ENCODE measurements at regions of chr3 and their contacts with region 1.

Region 1: DNA sequence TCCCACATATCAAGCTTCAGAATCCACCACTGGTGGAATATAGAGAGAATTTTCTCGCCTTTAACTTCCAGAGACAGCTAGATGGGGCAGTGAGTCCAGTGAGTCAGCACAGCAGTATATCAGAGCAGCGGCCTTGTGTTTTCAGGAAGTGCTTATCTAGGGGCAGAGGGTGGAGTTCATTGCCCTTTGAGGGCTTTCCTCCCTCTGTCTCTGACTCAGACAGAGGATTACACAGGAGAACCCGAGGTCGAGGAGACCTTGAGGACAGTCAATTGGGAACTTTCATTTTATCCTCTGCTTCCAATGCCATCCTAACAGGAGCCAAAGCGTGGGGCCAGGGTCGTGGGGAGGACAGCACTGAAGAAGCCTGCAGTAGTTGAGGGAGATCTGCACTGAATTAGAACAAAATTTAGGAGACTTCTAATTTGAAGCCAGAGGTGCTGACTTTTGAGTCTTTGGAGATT is 109.6 kb upstream of the UMPS start:
- DNase-seq: no peak
- H3K4me3 Mint-ChIP-seq: no peak overlapping the region
- H3K27ac Mint-ChIP-seq: peak overlapping the region; percentile 64
- H3K4me1 Mint-ChIP-seq: peaks cover 25% of the 10 kb centered on the region
- H3K27me3 Mint-ChIP-seq: peaks cover 11% of the 10 kb centered on the region

Region 2: GRCh38 chr3:124652009-124652408 is 31.4 kb after region 1 on chr3:
- intact Hi-C with region 1: no loop called
- DNase-seq: no peak
- H3K4me3 Mint-ChIP-seq: no peak overlapping the region
- H3K27ac Mint-ChIP-seq: no peak overlapping the region
- H3K4me1 Mint-ChIP-seq: peaks cover 20% of the 10 kb centered on the region
- H3K27me3 Mint-ChIP-seq: peaks cover 35% of the 10 kb centered on the region

Region 3: DNA sequence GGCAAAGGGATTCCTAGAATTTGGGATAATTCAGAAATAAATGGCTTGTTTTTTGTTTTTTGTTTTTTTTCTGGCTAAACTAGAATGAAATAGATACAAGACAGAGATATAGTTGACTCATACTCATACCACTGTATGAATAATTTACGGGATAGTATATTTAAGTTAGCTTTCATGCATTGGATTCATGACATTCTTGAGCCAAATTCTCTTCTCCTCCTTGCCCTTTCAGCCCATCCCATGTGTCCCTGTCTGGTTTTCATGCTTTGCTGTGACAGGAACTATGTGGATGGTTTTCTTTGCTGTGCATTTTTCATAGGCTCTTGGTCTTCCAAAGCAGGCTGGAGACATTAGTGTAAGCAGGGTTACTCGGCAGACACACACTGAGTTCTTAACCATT is 43.1 kb after region 1 on chr3:
- intact Hi-C with region 1: loop called (anchors 5 kb)
- DNase-seq: no peak
- H3K4me3 Mint-ChIP-seq: no peak overlapping the region
- H3K27ac Mint-ChIP-seq: no peak overlapping the region
- H3K4me1 Mint-ChIP-seq: peaks cover 6% of the 10 kb centered on the region
- H3K27me3 Mint-ChIP-seq: peaks cover 16% of the 10 kb centered on the region

Measured in activated T-helper 2 cell treated with anti-CD3 and anti-CD28 coated beads, Interferon-gamma antibody, Interleukin-2, Interleukin-4, amounts not matched to agents 10 μg/mL and 5 μg/mL and 100 μg/mL, durations not matched to agents 14 hours and 24 hours and 36 hours (primary cell).